Pancreas (tissue), 10 donors: ENCODE measurements at regions of chr10 and their contacts with region 1.

Region 1: DNA sequence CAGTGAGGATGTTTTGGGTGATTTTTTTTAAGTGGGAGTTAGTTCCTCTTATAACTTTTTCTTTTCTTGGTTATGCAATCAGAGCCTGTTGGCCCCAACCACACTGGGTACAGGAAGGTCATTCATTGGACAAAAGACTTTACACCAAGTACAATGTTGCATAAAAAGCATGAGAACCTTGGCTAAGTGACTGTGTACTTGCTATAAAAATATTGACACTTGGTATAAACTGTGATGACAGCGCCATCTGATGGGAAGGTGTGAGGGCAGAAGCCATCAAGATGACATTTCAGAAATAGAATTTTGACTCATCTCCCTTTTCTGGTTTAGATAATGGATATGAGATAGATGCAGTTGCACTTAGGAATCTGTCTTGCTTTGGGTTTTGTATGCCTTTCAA is 126.4 kb upstream of the CCDC6 start:
- DNase-seq: peak in 3 of 6 donors; percentile 45 to 58 (median 52)
- ATAC-seq: peak; percentile 93 to 95 (median 94)
- H3K4me3 ChIP-seq: no peak overlapping the region
- H3K27ac ChIP-seq: no peak overlapping the region
- H3K4me1 ChIP-seq: peaks cover 0 to 6% (median 0%) of the 10 kb centered on the region in 3 donors
- H3K27me3 ChIP-seq: no peaks in the 10 kb centered on the region
- CTCF ChIP-seq: peak in 3 of 4 donors; percentile 20 to 38 (median 31)

Region 2: DNA sequence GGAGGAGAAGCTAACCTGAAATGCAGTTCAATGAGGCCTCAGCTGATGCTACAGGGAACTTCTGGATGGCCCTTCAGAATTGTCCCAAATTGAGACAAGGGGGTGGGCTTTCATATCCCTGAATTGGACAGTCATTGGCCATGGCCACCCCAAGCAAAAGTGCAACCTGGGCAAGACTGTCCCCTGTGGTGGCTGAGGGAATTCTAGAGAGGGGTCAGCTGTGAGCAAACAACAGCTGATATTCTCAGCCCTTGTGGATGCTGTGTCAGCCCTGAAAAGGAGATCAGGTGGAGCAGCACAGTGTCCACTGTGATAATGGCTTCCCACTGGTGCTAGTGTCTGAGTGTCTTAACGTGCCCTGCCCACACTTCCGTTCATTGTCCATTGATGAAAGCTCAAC is 399.7 kb before region 1 on chr10:
- intact Hi-C with region 1: loop called in 2 of 3 experiments (anchors 10 kb)
- DNase-seq: no peak
- ATAC-seq: no peak
- H3K4me3 ChIP-seq: no peak overlapping the region
- H3K27ac ChIP-seq: no peak overlapping the region
- H3K4me1 ChIP-seq: no peaks in the 10 kb centered on the region
- H3K27me3 ChIP-seq: no peaks in the 10 kb centered on the region
- CTCF ChIP-seq: no peak

Region 3: GRCh38 chr10:59872892-59873463 is 159.7 kb before region 1 on chr10:
- intact Hi-C with region 1: loop called in 1 of 3 experiments (anchors 10 kb)
- DNase-seq: peak in 3 of 6 donors; percentile 30 to 43 (median 42)
- ATAC-seq: peak; percentile 59 to 75 (median 68)
- H3K4me3 ChIP-seq: no peak overlapping the region
- H3K27ac ChIP-seq: peak overlapping the region in 2 of 4 donors; percentile 8 to 56
- H3K4me1 ChIP-seq: peaks cover 16 to 21% (median 20%) of the 10 kb centered on the region in 3 donors
- H3K27me3 ChIP-seq: no peaks in the 10 kb centered on the region
- CTCF ChIP-seq: no peak